BJ (cell line): ENCODE measurements at regions of chr1 and their contacts with region 1.

Region 1: GRCh38 chr1:246931549-246932365 is at the start of gene AHCTF1:
- DNase-seq: peak; percentile 89
- H3K4me3 ChIP-seq: peak within 1 kb of the TSS; percentile 96
- H3K27me3 ChIP-seq: no peaks in the 10 kb centered on the region
- CTCF ChIP-seq: no peak
- polyA plus RNA-seq, gene AHCTF1: 6.1 and 14.4 TPM in 2 replicates

Region 2: DNA sequence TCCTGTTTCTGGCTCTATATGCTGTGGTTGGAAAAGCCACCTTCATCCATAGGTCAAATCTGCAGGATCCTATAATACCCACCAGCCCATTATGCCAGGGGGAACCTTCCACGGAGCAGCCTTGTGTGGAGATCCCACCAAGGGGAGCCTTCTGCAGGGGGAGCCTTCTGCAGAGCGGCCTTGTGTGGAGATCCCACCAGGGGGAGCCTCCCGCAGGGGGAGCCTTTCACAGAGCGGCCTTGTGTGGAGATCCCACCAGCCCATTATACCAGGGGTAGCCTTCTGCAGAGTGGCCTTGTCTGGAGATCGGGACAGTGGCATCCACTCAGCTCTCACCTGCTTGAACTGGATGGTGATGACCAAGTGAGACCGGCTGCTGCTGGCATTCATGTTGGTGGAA is 122.3 kb before region 1 on chr1:
- CTCF ChIA-PET with region 1: no interaction called
- POLR2A ChIA-PET with region 1: no interaction called
- DNase-seq: no peak
- H3K4me3 ChIP-seq: no peak overlapping the region
- H3K27me3 ChIP-seq: peaks cover 3% of the 10 kb centered on the region
- CTCF ChIP-seq: no peak

Region 3: DNA sequence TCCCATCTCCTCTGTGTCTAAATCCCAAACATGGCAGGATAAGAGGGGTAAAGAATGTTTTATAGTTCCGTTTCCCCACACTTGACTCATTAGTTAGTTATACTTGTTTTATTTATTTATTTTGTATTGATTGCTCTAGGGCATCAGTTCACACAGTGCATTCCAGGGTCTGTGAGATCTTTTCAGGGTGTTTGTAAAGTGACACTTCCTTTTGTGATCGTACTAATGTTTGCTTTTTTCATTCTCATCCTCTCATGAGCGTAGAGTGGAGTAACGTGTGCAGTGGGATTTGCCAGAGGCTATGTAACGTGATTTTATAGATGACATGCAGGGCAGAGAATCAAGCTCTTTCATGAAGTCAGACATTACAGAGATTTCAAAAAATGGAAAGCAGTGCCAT is 104.4 kb before region 1 on chr1:
- CTCF ChIA-PET with region 1: no interaction called
- POLR2A ChIA-PET with region 1: interaction called, 11 read pairs
- DNase-seq: no peak
- H3K4me3 ChIP-seq: no peak overlapping the region
- H3K27me3 ChIP-seq: no peaks in the 10 kb centered on the region
- CTCF ChIP-seq: no peak

Region 4: DNA sequence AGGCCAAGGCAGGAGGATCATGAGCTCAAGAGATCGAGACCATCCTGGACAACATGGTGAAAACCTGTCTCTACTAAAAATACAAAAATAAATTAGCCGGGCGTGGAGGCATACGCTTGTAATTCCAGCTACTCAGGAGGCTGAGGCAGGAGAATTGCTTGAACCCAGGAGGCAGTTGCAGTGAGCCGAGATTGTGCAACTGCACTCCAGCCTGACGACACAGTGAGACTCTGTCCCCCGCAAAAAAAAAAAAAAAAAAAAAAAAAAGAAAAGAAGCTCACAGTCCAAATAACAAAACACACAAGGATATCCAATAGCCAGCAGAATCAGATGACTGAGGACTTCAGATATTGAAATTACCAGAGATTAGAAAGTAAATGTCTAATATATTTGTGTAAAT is 11.9 kb before region 1 on chr1:
- CTCF ChIA-PET with region 1: no interaction called
- POLR2A ChIA-PET with region 1: interaction called, 13 read pairs
- DNase-seq: no peak
- H3K4me3 ChIP-seq: no peak overlapping the region
- H3K27me3 ChIP-seq: no peaks in the 10 kb centered on the region
- CTCF ChIP-seq: no peak